ENCODE measurements at regions of chr5 and their contacts with region 1.

Region 1: GRCh38 chr5:11719888-11720481 is 184.3 kb downstream of the CTNND2 start:
- DNase-seq: peak; percentile 4 to 51
- ATAC-seq: peak; percentile 73 to 93 (median 89)
- H3K4me3 ChIP-seq: no peak overlapping the region
- H3K4me3 Mint-ChIP-seq: no peak overlapping the region
- H3K27ac ChIP-seq: no peak overlapping the region
- H3K27ac Mint-ChIP-seq: no peak overlapping the region
- H3K4me1 ChIP-seq: no peaks in the 10 kb centered on the region
- H3K4me1 Mint-ChIP-seq: peaks cover 6 to 9% of the 10 kb centered on the region in 2 donors
- H3K27me3 ChIP-seq: no peaks in the 10 kb centered on the region
- H3K27me3 Mint-ChIP-seq: no peaks in the 10 kb centered on the region
- CTCF ChIP-seq: peak; percentile 63

Region 2: DNA sequence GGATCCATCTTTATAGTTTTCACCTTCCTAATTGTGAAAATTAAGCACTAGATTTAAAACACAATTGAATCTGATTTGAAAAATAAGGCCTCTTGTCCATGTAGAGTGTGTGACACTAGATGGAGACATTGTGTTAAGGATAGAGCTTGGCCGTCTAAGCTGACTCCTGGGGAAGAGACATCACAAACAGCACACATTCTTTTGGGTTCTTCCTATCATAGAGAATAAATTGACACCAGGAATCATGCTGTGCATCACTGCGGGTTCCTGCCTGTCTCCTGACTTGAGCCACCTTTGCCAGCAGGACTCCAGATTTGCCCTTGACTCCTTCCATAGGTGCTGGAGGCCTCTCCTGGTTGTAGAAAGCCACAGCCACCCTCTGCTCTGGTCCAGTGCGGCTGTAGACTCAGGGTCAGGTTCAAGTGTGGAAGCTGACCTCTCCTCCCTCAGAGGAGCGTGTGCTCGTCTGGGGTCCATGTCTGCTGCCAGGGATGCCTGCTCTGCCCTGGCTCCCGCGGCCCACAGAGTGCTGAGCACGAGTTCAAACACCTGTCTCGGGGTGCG is 1267.1 kb before region 1 on chr5:
- intact Hi-C with region 1: loop called (anchors 5 kb)
- DNase-seq: peak; percentile 14 to 78
- ATAC-seq: peak; percentile 83 to 97 (median 96)
- H3K4me3 ChIP-seq: no peak overlapping the region
- H3K4me3 Mint-ChIP-seq: no peak overlapping the region
- H3K27ac ChIP-seq: no peak overlapping the region
- H3K27ac Mint-ChIP-seq: no peak overlapping the region
- H3K4me1 ChIP-seq: no peaks in the 10 kb centered on the region
- H3K4me1 Mint-ChIP-seq: peaks cover 16 to 21% of the 10 kb centered on the region in 2 donors
- H3K27me3 ChIP-seq: no peaks in the 10 kb centered on the region
- H3K27me3 Mint-ChIP-seq: no peaks in the 10 kb centered on the region
- CTCF ChIP-seq: peak; percentile 65

Region 3: DNA sequence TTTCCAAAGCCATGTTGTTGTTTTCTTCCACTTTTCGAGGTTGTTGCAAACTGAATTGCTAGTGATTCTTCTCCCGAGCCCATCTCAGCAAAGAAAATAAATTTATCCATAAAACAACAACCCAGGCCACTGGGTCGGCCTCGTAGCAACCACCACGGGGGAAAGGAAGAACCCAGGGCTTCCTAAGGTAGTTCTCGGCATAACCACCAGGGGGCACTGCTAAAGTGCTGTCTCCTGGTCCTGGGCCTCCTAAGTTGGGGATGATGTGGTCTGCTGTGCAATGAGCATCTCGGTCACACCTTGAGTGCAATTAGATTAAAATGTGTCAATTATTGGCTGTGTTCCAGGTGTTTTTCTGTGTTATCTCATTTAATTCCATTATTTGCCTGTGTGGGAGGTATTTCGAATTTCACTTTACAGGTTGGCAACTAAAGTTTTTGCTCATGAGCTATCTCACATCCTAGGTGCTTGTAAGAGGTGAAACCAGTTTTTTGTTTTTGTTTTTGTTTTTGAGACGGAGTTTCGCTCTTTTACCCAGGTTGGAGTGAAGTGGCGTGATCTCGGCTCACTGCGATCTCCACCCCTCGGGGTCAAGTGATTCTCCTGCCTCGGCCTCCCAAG is 856.1 kb before region 1 on chr5:
- intact Hi-C with region 1: loop called (anchors 10 kb)
- DNase-seq: peak; percentile 45 to 65
- ATAC-seq: peak; percentile 72 to 91 (median 77)
- H3K4me3 ChIP-seq: no peak overlapping the region
- H3K4me3 Mint-ChIP-seq: no peak overlapping the region
- H3K27ac ChIP-seq: no peak overlapping the region
- H3K27ac Mint-ChIP-seq: no peak overlapping the region
- H3K4me1 ChIP-seq: no peaks in the 10 kb centered on the region
- H3K4me1 Mint-ChIP-seq: peaks cover 0 to 4% of the 10 kb centered on the region in 2 donors
- H3K27me3 ChIP-seq: no peaks in the 10 kb centered on the region
- H3K27me3 Mint-ChIP-seq: peaks cover 3 to 7% of the 10 kb centered on the region in 2 donors
- CTCF ChIP-seq: peak; percentile 84

Region 4: DNA sequence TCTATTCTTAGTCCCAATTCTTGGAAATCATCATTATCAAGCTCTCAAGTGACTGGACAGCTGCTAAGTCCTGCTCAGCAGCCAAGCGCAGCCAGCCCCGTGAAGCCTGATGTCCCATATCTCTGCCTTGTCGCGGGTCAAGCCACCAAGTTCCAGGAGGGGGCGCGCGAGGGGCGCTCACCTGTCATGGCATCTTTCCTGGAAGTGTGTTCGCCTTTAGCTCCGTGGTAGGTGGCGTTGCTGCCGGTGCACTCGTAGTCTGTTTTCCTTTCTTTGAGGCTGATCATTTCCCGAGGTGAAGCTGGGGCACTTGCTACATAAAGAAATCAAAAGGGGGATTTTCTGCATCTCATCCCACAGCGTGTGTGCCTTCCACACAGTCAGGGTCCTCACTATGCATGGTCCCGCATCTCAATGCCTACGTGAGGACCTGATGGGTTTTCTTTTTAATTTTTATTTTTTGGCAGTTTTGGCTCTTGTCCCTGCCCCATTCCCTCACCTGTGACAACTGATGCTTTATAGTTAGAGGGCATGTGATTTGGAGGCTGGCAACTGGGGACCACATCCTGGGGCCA is 732.0 kb before region 1 on chr5:
- intact Hi-C with region 1: loop called (anchors 1 kb)
- DNase-seq: peak; percentile 57 to 62
- ATAC-seq: peak; percentile 63 to 91 (median 65)
- H3K4me3 ChIP-seq: no peak overlapping the region
- H3K4me3 Mint-ChIP-seq: no peak overlapping the region
- H3K27ac ChIP-seq: no peak overlapping the region
- H3K27ac Mint-ChIP-seq: no peak overlapping the region
- H3K4me1 ChIP-seq: peaks cover 7% of the 10 kb centered on the region
- H3K4me1 Mint-ChIP-seq: peaks cover 11 to 16% of the 10 kb centered on the region in 2 donors
- H3K27me3 ChIP-seq: peaks cover 2% of the 10 kb centered on the region
- H3K27me3 Mint-ChIP-seq: peaks cover 19 to 20% of the 10 kb centered on the region in 2 donors
- CTCF ChIP-seq: peak; percentile 70

Region 5: GRCh38 chr5:11268891-11269290 is 451.1 kb before region 1 on chr5:
- intact Hi-C with region 1: loop called (anchors 1 kb)
- DNase-seq: no peak
- ATAC-seq: no peak
- H3K4me3 ChIP-seq: no peak overlapping the region
- H3K4me3 Mint-ChIP-seq: no peak overlapping the region
- H3K27ac ChIP-seq: no peak overlapping the region
- H3K27ac Mint-ChIP-seq: no peak overlapping the region
- H3K4me1 ChIP-seq: no peaks in the 10 kb centered on the region
- H3K4me1 Mint-ChIP-seq: no peaks in the 10 kb centered on the region
- H3K27me3 ChIP-seq: no peaks in the 10 kb centered on the region
- H3K27me3 Mint-ChIP-seq: peaks cover 5 to 7% of the 10 kb centered on the region in 2 donors
- CTCF ChIP-seq: no peak

Region 6: GRCh38 chr5:11483630-11484029 is 236.4 kb before region 1 on chr5:
- intact Hi-C with region 1: no loop called
- DNase-seq: no peak
- ATAC-seq: no peak
- H3K4me3 ChIP-seq: no peak overlapping the region
- H3K4me3 Mint-ChIP-seq: no peak overlapping the region
- H3K27ac ChIP-seq: no peak overlapping the region
- H3K27ac Mint-ChIP-seq: no peak overlapping the region
- H3K4me1 ChIP-seq: no peaks in the 10 kb centered on the region
- H3K4me1 Mint-ChIP-seq: no peaks in the 10 kb centered on the region
- H3K27me3 ChIP-seq: no peaks in the 10 kb centered on the region
- H3K27me3 Mint-ChIP-seq: peaks cover 13 to 25% of the 10 kb centered on the region in 2 donors
- CTCF ChIP-seq: no peak

Region 7: GRCh38 chr5:11547745-11548144 is 172.2 kb before region 1 on chr5:
- intact Hi-C with region 1: no loop called
- DNase-seq: no peak
- ATAC-seq: no peak
- H3K4me3 ChIP-seq: no peak overlapping the region
- H3K4me3 Mint-ChIP-seq: no peak overlapping the region
- H3K27ac ChIP-seq: no peak overlapping the region
- H3K27ac Mint-ChIP-seq: no peak overlapping the region
- H3K4me1 ChIP-seq: no peaks in the 10 kb centered on the region
- H3K4me1 Mint-ChIP-seq: no peaks in the 10 kb centered on the region
- H3K27me3 ChIP-seq: no peaks in the 10 kb centered on the region
- H3K27me3 Mint-ChIP-seq: peaks cover 19 to 40% of the 10 kb centered on the region in 2 donors
- CTCF ChIP-seq: no peak

Region 8: DNA sequence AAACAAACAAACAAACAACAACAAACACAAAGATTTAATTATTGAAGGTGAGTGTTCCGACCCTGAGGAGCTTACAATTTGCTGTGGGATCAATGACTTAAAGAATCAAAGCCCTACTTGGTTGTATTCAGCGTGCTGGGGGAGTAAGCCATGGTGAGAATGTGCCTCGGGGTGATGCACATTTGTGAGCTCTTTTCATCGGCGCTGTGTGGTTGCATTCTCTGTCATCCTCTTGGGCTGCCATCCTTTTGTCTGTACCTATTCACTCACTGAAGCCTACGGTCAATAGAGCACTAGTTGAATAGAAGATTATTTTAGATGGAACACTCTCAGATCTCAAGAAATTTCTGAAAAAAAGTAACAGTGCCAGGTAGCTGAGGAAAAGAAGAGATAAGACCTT is 19.6 kb before region 1 on chr5:
- intact Hi-C with region 1: no loop called
- DNase-seq: no peak
- ATAC-seq: no peak
- H3K4me3 ChIP-seq: no peak overlapping the region
- H3K4me3 Mint-ChIP-seq: no peak overlapping the region
- H3K27ac ChIP-seq: no peak overlapping the region
- H3K27ac Mint-ChIP-seq: no peak overlapping the region
- H3K4me1 ChIP-seq: no peaks in the 10 kb centered on the region
- H3K4me1 Mint-ChIP-seq: no peaks in the 10 kb centered on the region
- H3K27me3 ChIP-seq: no peaks in the 10 kb centered on the region
- H3K27me3 Mint-ChIP-seq: peaks cover 15 to 20% of the 10 kb centered on the region in 2 donors
- CTCF ChIP-seq: no peak